SK-N-SH (cell line): ENCODE measurements at regions of chr10 and their contacts with region 1.

Region 1: GRCh38 chr10:129853562-129853903 is 110.5 kb downstream of the EBF3 start:
- DNase-seq: peak; percentile 48
- H3K4me3 ChIP-seq: no peak overlapping the region
- H3K27ac ChIP-seq: no peak overlapping the region
- H3K4me1 ChIP-seq: no peaks in the 10 kb centered on the region; a peak in 2 of 4 replicates
- H3K27me3 ChIP-seq: no peaks in the 10 kb centered on the region
- CTCF ChIP-seq: no peak
- EP300 ChIP-seq: no peak
- RAD21 ChIP-seq: peak; percentile 42; the same call in 1 of the 2 replicates

Region 2: DNA sequence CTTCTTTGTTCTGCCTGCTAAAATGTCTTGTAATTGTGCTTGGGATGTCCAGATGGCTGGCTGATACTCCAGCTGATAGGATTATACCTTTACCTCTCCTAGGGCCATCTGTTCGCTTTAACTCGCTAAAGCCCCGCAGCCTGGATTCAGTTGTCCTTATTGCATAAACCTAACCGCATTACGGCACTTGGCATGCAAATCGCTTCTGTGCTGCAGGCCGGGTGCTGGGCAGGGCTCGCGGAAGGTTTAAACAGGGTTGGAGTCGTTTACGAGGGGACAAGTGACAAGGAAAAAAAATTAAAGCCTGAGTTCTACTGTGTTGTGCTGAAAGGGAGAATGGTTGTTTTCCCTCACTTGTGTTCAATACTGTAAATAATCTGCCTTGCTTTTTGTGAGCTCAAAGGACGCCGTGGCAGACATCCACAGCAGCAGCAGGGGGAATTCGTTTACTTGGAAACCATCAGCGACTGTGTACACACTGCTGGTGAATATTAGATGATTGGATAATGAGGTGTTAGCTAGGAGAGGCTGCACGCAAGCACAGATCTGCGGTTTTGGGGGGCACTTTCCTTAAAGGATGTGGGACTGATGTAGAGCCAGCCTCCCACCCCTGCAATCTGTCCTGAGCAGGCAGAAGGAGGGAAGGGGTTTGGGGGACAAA is 17.6 kb after region 1 on chr10:
- CTCF ChIA-PET with region 1: interaction called, 13 read pairs
- POLR2A ChIA-PET with region 1: no interaction called
- DNase-seq: peak; percentile 82
- H3K4me3 ChIP-seq: no peak overlapping the region
- H3K27ac ChIP-seq: no peak overlapping the region; a peak in 1 of 4 replicates
- H3K4me1 ChIP-seq: peaks cover 0 to 21% of the 10 kb centered on the region in 2 experiments; a peak in 1 of 4 replicates
- H3K27me3 ChIP-seq: no peaks in the 10 kb centered on the region
- CTCF ChIP-seq: no peak
- EP300 ChIP-seq: peak in 1 of 2 experiments; percentile 75; a peak in 2 of 4 replicates
- RAD21 ChIP-seq: no peak

Region 3: DNA sequence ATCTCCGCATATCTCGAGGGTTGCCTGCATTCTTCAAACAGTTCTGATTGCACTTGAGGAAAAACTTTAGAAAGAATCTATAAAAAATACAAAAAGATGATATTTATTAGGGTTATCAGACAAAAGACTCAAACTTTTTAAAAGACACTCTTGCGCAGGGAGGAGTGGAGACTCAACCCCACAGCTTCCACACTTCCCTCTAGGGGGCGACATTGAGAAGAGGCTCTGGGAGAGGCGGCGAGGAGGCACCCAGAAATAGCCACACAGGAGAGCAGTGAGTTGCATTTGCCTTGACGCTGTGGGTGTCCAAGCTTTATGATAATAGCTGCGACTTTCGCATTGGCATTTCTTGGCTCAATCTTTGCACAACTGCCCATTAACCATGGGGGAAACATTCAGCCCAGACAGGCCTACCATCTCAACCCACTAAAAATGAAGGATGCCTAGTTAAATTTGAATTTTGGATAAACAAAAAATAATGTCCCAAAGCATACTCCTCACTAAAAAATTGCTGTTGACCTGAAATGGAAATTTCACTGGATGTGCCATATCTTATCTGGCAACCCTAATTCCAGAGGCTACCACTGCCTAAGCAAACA is 24.3 kb after region 1 on chr10:
- CTCF ChIA-PET with region 1: interaction called, 13 read pairs
- POLR2A ChIA-PET with region 1: no interaction called
- DNase-seq: peak; percentile 50
- H3K4me3 ChIP-seq: no peak overlapping the region
- H3K27ac ChIP-seq: no peak overlapping the region
- H3K4me1 ChIP-seq: no peaks in the 10 kb centered on the region
- H3K27me3 ChIP-seq: no peaks in the 10 kb centered on the region
- CTCF ChIP-seq: 0 out of 2 replicates have a peak, but pooled peaks have one; percentile 13
- EP300 ChIP-seq: no peak
- RAD21 ChIP-seq: peak; percentile 18; the same call in 1 of the 2 replicates